ENCODE measurements at regions of chr16 and their contacts with region 1.

Region 1: GRCh38 chr16:72832621-72833248 is 215.2 kb downstream of the ZFHX3 start:
- DNase-seq: peak in 1 of 2 experiments; percentile 98
- H3K4me3 ChIP-seq: no peak overlapping the region
- H3K27ac ChIP-seq: no peak overlapping the region
- H3K4me1 ChIP-seq: no peaks in the 10 kb centered on the region; a peak in 1 of 7 replicates
- H3K27me3 ChIP-seq: no peaks in the 10 kb centered on the region
- CTCF ChIP-seq: peak; percentile 95 to 99 (median 97)
- EP300 ChIP-seq: no peak
- POLR2A ChIP-seq: no peak
- RAD21 ChIP-seq: peak; percentile 92 to 93

Region 2: DNA sequence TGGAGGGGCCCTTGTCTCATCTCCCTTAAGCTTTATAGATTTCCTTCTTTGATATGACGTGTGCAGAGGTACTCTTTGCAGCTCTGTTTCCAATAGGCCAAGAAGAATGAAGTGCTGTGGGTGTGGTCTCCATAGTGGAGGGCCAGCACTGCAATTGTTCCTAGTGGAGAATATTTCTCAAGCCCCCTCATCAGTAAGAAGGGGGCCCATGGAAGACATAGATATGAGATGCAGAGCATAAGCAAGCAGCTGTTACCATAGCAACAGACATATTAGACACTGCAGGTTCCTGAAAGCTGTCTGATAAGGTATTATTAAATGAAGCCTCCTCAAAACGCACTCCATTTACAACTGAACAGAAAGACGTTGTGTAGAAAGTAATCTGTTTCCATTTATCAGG is 25.5 kb before region 1 on chr16:
- CTCF ChIA-PET with region 1: interaction called, 11 read pairs
- POLR2A ChIA-PET with region 1: no interaction called
- DNase-seq: no peak
- H3K4me3 ChIP-seq: no peak overlapping the region
- H3K27ac ChIP-seq: no peak overlapping the region
- H3K4me1 ChIP-seq: peaks cover 0 to 5% (median 2%) of the 10 kb centered on the region in 4 experiments; a peak in 3 of 7 replicates
- H3K27me3 ChIP-seq: no peaks in the 10 kb centered on the region
- CTCF ChIP-seq: no peak
- EP300 ChIP-seq: no peak
- POLR2A ChIP-seq: no peak
- RAD21 ChIP-seq: no peak

Region 3: DNA sequence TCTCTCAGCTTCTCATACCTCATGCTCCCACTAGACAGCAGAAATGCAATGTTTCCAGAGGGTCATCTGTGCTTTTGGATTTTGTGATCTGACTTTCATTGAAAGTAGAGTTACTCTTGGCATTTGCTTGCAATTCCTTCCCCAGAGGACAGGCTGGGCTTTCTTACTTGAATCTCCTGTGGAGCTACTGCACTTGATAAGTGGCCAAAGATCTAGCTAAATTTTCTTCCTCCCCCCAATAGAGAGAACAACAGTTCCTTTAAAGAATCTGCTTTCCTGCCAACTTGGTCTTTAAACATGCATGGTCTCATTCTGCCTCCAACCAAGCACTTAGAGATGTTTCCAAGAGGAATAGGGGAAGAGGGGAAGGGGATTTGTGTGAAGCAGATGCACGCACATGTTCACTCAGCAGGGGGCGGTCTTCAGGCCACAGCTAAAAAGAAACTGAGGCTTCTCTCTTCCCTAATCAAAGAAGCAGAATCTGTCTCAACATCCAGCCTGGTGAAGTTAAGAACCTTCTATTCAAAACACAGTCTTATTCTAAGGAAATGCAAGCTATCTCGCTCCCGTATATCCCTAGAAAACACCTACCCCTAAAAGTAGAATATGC is 14.4 kb before region 1 on chr16:
- CTCF ChIA-PET with region 1: interaction called, 18 read pairs
- POLR2A ChIA-PET with region 1: no interaction called
- DNase-seq: peak; percentile 5 to 57
- H3K4me3 ChIP-seq: no peak overlapping the region
- H3K27ac ChIP-seq: no peak overlapping the region
- H3K4me1 ChIP-seq: no peaks in the 10 kb centered on the region
- H3K27me3 ChIP-seq: no peaks in the 10 kb centered on the region
- CTCF ChIP-seq: peak; percentile 37 to 62 (median 53)
- EP300 ChIP-seq: no peak
- POLR2A ChIP-seq: no peak
- RAD21 ChIP-seq: peak; percentile 30 to 44; a peak in 3 of 4 replicates

Region 4: DNA sequence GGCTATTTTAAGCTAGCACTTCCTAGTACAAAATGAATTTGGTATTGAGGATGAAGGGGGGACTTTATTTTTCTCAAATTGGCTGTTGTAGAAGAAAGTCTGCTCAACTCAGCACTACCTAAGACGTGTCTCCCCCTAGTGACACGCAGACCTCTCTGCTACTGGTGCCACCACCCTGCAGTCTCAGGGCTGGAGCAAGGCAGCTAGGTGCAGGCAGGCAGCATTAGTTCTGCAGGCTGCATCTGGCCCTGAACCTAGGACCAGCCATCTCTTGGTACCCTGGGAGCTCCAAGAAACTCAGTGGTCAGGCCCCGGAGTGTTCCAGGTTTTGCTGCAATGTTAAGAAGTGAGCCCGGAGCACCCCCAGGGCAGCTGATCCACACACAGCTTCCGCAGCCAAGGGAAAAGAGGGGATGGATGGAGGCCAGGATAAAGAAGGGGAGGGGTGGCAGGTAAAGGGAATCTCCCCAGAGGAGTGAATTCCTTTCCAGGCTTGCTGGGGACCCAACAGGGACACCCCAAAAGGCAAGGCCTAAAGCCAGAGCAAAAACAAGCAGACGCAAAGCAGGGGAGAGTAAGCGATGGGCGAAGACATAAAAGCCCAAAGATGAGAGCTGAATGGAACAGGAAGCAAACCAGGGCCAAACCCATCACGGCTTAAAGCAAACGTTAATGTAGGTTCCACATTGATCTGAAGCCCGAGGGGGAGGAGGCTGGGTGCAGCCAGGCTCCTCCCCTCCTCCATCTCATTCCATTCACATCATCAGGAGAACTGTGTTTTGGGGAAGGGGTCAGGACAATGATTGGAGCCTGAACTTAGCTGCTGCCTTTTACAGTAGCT is 14.7 kb after region 1 on chr16:
- CTCF ChIA-PET with region 1: interaction called, 376 read pairs
- POLR2A ChIA-PET with region 1: no interaction called
- DNase-seq: no peak
- H3K4me3 ChIP-seq: no peak overlapping the region
- H3K27ac ChIP-seq: no peak overlapping the region
- H3K4me1 ChIP-seq: peaks cover 0 to 9% (median 3%) of the 10 kb centered on the region in 4 experiments; a peak in 3 of 7 replicates
- H3K27me3 ChIP-seq: no peaks in the 10 kb centered on the region
- CTCF ChIP-seq: peak; percentile 77 to 88 (median 82)
- EP300 ChIP-seq: no peak
- POLR2A ChIP-seq: no peak
- RAD21 ChIP-seq: peak; percentile 78

Region 5: DNA sequence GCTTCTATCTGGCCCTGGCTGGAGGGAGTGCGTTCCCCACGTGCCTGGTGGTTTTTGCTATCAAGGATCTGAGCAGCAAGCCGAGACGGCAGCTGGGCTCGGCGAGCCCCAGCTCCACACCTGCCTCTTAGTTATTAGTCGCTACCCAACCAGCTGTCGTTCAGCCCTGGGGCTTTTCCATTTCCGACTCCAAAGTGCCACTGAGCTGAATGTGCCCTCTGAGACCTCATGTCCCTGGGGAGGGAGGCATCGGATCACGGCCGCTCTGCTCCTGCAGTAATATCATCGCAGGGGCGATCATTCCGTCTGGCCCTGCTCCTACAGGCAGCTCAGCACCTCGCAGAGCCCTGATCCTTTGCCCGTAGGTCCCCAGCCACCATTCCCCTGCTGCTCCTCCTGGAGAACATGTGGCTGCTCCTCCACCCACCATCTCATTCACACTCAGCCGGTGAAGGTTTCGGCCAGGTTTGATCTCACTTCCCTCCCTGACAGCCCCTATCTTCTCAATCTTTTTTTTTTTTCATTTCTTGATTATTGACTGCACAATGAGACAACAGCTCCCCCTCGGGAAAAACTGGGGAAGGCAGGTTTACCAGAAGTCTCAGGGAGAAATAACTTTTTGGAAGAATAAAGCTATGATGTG is 128.5 kb after region 1 on chr16:
- CTCF ChIA-PET with region 1: interaction called, 12 read pairs
- POLR2A ChIA-PET with region 1: no interaction called
- DNase-seq: no peak
- H3K4me3 ChIP-seq: no peak overlapping the region
- H3K27ac ChIP-seq: no peak overlapping the region
- H3K4me1 ChIP-seq: no peaks in the 10 kb centered on the region; a peak in 1 of 7 replicates
- H3K27me3 ChIP-seq: no peaks in the 10 kb centered on the region
- CTCF ChIP-seq: peak in 2 of 3 experiments; percentile 7 to 8; a peak in 2 of 4 replicates
- EP300 ChIP-seq: no peak
- POLR2A ChIP-seq: no peak
- RAD21 ChIP-seq: peak; percentile 25 to 35; a peak in 3 of 4 replicates

Region 6: GRCh38 chr16:73196670-73197069 is 363.9 kb after region 1 on chr16:
- CTCF ChIA-PET with region 1: interaction called, 12 read pairs
- POLR2A ChIA-PET with region 1: no interaction called
- DNase-seq: peak; percentile 51 to 74
- H3K4me3 ChIP-seq: no peak overlapping the region
- H3K27ac ChIP-seq: no peak overlapping the region
- H3K4me1 ChIP-seq: no peaks in the 10 kb centered on the region; a peak in 1 of 7 replicates
- H3K27me3 ChIP-seq: peaks cover 0 to 6% (median 0%) of the 10 kb centered on the region in 4 experiments; a peak in 2 of 7 replicates
- CTCF ChIP-seq: peak; percentile 79 to 92 (median 84)
- EP300 ChIP-seq: no peak
- POLR2A ChIP-seq: no peak
- RAD21 ChIP-seq: peak; percentile 95 to 97

Measured in H1 (cell line).